MCF 10A (cell line): ENCODE measurements at regions of chr20 and their contacts with region 1.

Region 1: DNA sequence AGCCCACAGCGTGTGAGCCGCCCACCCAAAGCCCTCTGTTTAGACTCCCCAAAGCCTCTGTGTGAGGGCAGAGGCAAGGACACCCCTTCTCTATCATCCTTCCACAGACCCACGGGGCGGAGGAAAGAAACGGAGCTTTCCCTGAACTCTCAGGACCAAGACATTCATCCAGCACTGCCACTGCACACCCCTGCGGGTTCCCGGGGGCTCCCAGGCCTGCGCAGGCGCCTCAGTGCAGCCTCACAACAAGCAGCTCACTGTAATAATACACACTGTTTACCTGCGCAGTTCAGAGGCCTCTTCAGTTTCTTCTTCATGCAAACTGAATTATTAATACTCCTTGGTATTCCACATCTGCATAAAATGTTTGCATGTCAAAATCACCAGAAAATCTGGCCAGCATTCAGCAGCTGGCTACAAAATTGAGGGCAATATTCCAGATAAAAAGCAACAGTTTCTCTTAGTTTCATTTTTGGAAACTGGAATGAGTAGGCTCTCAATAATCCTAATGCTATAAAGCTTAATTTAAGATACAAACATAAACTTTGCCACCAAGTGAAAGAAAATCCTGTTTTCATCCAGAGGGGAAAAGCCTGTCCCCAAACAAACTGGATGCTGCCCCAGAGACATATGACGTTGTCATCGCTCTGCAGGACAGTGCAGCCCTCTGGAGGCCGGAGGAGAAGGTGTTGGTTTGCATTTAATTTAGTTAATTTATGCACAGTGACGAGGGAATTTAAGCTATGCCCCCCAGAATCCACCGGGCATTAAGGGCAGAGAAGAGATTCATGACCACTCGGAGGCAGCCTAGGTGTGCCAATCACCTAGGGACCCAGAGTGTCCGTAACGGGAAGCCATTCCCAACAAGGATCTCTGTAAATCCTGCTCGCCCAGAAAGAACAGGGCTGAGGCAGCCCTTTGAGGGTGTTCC is 45.3 kb downstream of the NINL start:
- DNase-seq: peak; percentile 29
- H3K4me3 Mint-ChIP-seq: no peak overlapping the region
- H3K27ac Mint-ChIP-seq: no peak overlapping the region
- H3K4me1 Mint-ChIP-seq: no peaks in the 10 kb centered on the region
- H3K27me3 Mint-ChIP-seq: no peaks in the 10 kb centered on the region
- CTCF ChIP-seq: no peak

Region 2: DNA sequence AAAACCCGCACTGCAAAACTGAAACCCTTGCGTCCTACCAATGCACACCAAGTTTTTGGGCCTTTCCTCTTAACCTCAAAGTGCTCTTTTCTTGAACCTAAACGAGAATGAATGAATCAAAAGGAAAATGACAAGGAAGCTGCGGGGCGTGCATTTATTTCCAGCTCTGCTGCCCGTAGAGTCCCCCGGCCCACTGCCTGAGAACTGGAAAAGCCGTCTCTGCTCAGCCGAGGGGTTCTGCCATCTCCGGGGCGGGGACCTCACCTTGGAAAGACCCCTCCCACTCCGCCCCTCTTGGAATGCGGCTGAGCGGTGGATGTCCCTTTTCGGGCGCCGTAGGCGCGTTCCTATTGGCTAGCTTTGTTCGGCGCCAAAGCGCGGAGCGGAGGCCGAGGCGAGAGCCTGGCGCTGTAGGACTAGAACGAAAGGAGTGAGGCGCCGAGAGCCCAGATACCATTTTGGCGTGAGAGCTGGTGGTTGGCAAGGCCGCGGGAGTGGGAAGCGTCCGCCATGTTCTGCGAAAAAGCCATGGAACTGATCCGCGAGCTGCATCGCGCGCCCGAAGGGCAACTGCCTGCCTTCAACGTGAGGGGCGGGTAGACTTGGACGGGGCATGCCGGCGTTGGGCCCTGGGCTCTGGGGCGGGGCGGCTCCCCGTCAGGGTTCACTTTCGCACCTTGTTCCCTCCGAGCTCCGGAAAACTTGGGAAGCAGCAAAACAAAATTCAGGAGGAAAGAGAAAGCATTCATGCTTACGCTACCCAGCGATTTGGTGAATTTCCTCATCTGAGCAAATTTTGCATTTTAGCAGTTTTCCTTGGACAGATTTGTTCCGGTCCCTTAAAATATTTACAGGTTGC is 132.5 kb before region 1 on chr20 and contains the start of gene GINS1:
- CTCF ChIA-PET with region 1: interaction called, 14 read pairs
- POLR2A ChIA-PET with region 1: interaction called, 8 read pairs
- intact Hi-C with region 1: no loop called
- DNase-seq: peak; percentile 90
- H3K4me3 Mint-ChIP-seq: peak within 1 kb of the TSS; percentile 92
- H3K27ac Mint-ChIP-seq: peak within 1 kb of the TSS; percentile 69
- H3K4me1 Mint-ChIP-seq: peaks cover 15% of the 10 kb centered on the region
- H3K27me3 Mint-ChIP-seq: no peaks in the 10 kb centered on the region
- CTCF ChIP-seq: no peak
- total RNA-seq, gene GINS1: 5.2 and 6.0 TPM in 2 replicates

Region 3: DNA sequence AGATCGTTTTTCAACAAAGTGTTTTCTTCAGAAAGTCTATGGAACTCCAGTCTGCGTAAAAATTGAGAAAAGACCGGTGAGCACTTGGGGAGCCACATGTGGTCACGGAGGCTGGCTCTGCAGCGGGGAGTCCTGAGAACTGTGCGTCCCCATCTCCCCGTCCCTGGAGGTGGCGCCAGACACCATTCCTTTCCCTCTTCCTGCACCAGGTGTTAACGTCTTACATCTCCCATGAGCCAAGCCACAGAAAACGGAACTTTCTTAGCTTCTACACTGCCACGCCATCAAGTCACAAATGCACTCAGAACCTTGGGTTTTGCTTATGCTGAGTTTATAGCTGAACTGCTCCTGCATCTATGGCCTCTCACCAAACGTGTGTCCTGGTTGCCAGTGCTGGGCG is 70.0 kb before region 1 on chr20:
- CTCF ChIA-PET with region 1: interaction called, 64 read pairs
- POLR2A ChIA-PET with region 1: no interaction called
- intact Hi-C with region 1: no loop called
- DNase-seq: peak; percentile 73
- H3K4me3 Mint-ChIP-seq: no peak overlapping the region
- H3K27ac Mint-ChIP-seq: no peak overlapping the region
- H3K4me1 Mint-ChIP-seq: no peaks in the 10 kb centered on the region
- H3K27me3 Mint-ChIP-seq: no peaks in the 10 kb centered on the region
- CTCF ChIP-seq: peak; percentile 66

Region 4: GRCh38 chr20:25486377-25486776 is 53.6 kb before region 1 on chr20:
- CTCF ChIA-PET with region 1: interaction called, 20 read pairs
- POLR2A ChIA-PET with region 1: no interaction called
- intact Hi-C with region 1: no loop called
- DNase-seq: no peak
- H3K4me3 Mint-ChIP-seq: no peak overlapping the region
- H3K27ac Mint-ChIP-seq: no peak overlapping the region
- H3K4me1 Mint-ChIP-seq: peaks cover 14% of the 10 kb centered on the region
- H3K27me3 Mint-ChIP-seq: no peaks in the 10 kb centered on the region
- CTCF ChIP-seq: no peak

Region 5: DNA sequence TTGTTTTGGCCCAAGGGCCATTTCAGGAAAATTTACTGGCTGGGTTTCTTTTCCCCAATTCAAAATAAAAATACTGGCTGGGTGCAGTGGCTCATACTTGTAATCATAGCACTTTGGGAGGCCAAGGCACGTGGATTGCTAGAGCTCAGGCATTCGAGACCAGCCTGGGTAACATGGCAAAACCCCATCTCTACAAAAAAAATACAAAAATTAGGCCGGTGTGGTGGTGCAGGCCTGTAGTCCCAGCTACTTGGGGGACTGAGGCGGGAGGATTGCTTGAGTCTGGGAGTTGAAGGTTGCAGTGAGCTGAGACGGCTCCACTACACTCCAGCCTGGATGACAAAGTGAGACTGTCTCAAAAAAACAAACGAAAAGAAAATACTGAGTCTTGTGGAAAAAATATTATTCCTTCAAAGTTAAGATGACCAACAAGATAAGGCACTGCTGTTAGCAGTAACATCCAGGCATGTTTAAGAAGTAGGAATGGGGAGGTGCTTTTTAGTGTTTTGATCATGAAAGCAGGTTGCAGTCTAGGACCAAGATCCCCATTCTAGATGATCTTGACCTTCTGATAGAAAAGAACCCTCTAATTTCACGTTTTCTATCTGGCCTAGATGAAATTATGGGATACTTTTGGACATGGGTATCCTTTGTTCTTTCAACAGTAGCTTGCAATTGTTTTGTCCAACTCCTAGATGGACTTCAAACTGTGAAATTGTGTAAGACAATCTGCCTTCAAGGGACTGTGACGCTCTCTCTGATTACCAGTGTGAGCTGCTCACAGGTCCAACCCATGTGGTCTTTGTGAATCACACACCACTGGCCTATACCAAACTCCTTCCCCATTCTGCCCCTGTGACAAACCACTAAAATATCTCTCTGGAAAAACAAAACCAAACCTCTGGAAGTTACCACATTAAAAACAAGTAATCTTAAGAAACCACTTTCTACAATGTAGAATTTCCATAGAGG is 14.4 kb before region 1 on chr20:
- CTCF ChIA-PET with region 1: interaction called, 16 read pairs
- POLR2A ChIA-PET with region 1: interaction called, 4 read pairs
- intact Hi-C with region 1: no loop called
- DNase-seq: peak; percentile 87
- H3K4me3 Mint-ChIP-seq: no peak overlapping the region
- H3K27ac Mint-ChIP-seq: no peak overlapping the region
- H3K4me1 Mint-ChIP-seq: peaks cover 11% of the 10 kb centered on the region
- H3K27me3 Mint-ChIP-seq: no peaks in the 10 kb centered on the region
- CTCF ChIP-seq: no peak

Region 6: GRCh38 chr20:25623736-25624499 is 83.9 kb after region 1 on chr20 and contains the start of gene NANP:
- CTCF ChIA-PET with region 1: interaction called, 12 read pairs
- POLR2A ChIA-PET with region 1: no interaction called
- intact Hi-C with region 1: no loop called
- DNase-seq: peak; percentile 98
- H3K4me3 Mint-ChIP-seq: peak within 1 kb of the TSS; percentile 78
- H3K27ac Mint-ChIP-seq: peak within 1 kb of the TSS; percentile 73
- H3K4me1 Mint-ChIP-seq: peaks cover 20% of the 10 kb centered on the region
- H3K27me3 Mint-ChIP-seq: no peaks in the 10 kb centered on the region
- CTCF ChIP-seq: no peak
- total RNA-seq, gene NANP: 5.2 and 5.7 TPM in 2 replicates